H1 (cell line): ENCODE measurements at regions of chr19 and their contacts with region 1.

Region 1: GRCh38 chr19:50518091-50519005 is 4.6 kb upstream of the ASPDH start:
- DNase-seq: peak in 1 of 2 experiments; percentile 89
- H3K4me3 ChIP-seq: no peak overlapping the region
- H3K27ac ChIP-seq: no peak overlapping the region
- H3K4me1 ChIP-seq: peaks cover 0 to 3% (median under 1%) of the 10 kb centered on the region in 4 experiments; a peak in 2 of 7 replicates
- H3K27me3 ChIP-seq: peaks cover 0 to 10% (median 3%) of the 10 kb centered on the region in 4 experiments; a peak in 5 of 7 replicates
- CTCF ChIP-seq: peak; percentile 69 to 87 (median 82)
- EP300 ChIP-seq: no peak
- POLR2A ChIP-seq: no peak
- RAD21 ChIP-seq: no peak; a peak in 1 of 4 replicates

Region 2: DNA sequence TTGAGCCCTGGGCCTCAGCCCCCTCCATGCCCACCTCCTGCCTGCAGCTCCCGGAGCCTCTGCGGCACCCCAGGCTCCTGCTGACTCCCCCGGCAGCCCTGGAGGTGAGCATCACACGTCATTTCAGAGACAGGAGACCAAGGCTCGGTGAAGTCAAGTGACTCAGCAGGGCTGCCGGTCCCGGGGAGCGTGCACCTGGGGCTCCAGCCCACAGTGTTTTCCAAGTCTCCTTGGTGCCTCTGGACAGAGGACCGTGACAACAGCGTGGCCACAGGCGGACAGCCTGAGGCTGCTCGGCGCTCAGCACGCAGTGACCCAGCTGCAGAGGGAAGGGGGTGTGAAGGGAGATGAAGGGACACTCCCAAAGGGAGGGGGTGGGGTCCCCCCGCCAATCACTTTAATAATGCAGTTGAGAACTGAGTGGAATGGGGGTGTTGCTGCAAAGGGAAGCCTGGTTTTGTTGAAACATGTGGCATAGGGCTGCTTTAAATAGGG is 12.8 kb after region 1 on chr19:
- CTCF ChIA-PET with region 1: interaction called, 206 read pairs
- POLR2A ChIA-PET with region 1: interaction called, 4 read pairs
- DNase-seq: no peak
- H3K4me3 ChIP-seq: no peak overlapping the region
- H3K27ac ChIP-seq: no peak overlapping the region
- H3K4me1 ChIP-seq: peaks cover 0 to 5% (median 1%) of the 10 kb centered on the region in 4 experiments; a peak in 3 of 7 replicates
- H3K27me3 ChIP-seq: no peaks in the 10 kb centered on the region; a peak in 1 of 7 replicates
- CTCF ChIP-seq: no peak
- EP300 ChIP-seq: no peak
- POLR2A ChIP-seq: no peak
- RAD21 ChIP-seq: no peak